Heart right ventricle (tissue), 16 donors: ENCODE measurements at regions of chr15 and their contacts with region 1.

Region 1: GRCh38 chr15:97909291-97909891 is 51.1 kb upstream of the ARRDC4 start:
- DNase-seq: peak; percentile 48 to 64
- ATAC-seq: peak; percentile 42 to 88 (median 85)
- H3K4me3 ChIP-seq: no peak overlapping the region
- H3K27ac ChIP-seq: no peak overlapping the region
- H3K4me1 ChIP-seq: peaks cover 0 to 2% (median 0%) of the 10 kb centered on the region in 9 donors
- H3K27me3 ChIP-seq: peaks cover 0 to 61% (median 37%) of the 10 kb centered on the region in 7 donors
- CTCF ChIP-seq: peak; percentile 66 to 96 (median 93)

Region 2: GRCh38 chr15:97875513-97876280 is 33.7 kb before region 1 on chr15:
- intact Hi-C with region 1: no loop called
- DNase-seq: peak in 1 of 2 donors; percentile 50
- ATAC-seq: peak; percentile 42 to 91 (median 77)
- H3K4me3 ChIP-seq: peak overlapping the region in 5 of 10 donors; percentile 24 to 41 (median 31)
- H3K27ac ChIP-seq: peak overlapping the region in 3 of 10 donors; percentile 53 to 63 (median 53)
- H3K4me1 ChIP-seq: no peaks in the 10 kb centered on the region
- H3K27me3 ChIP-seq: no peaks in the 10 kb centered on the region
- CTCF ChIP-seq: peak in 4 of 9 donors; percentile 10 to 41 (median 28)

Region 3: GRCh38 chr15:97960364-97961066 is 51.1 kb after region 1 on chr15 and contains the start of gene ARRDC4:
- intact Hi-C with region 1: loop called in 1 of 10 experiments (anchors 10 kb)
- DNase-seq: peak; percentile 100
- ATAC-seq: peak; percentile 97 to 100 (median 99)
- H3K4me3 ChIP-seq: peak within 1 kb of the TSS; percentile 84 to 98 (median 92)
- H3K27ac ChIP-seq: peak within 1 kb of the TSS; percentile 82 to 97 (median 96)
- H3K4me1 ChIP-seq: peaks cover 0 to 43% (median 16%) of the 10 kb centered on the region in 9 donors
- H3K27me3 ChIP-seq: no peaks in the 10 kb centered on the region
- CTCF ChIP-seq: no peak
- total RNA-seq, gene ARRDC4: 9.4 to 26.4 (median 14.5) TPM

Region 4: DNA sequence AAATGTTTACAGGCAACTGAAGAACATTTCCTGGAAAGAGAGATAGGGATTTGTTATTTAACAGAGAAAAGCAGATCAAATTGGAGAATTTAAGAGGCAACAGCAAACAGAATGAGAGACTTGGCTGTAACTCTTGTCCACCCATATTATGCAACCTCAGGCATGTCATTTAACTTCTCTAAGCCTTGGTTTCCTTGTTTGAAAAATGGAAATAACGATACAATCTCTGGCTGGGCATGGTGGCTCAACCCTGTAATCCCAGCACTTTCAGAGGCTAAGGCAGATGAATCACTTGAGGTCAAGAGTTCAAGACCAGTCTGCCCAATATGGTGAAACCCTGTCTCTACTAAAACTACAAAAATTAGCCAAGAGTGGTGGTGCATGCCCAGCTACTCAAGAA is 74.8 kb after region 1 on chr15:
- intact Hi-C with region 1: no loop called
- DNase-seq: no peak
- ATAC-seq: no peak
- H3K4me3 ChIP-seq: no peak overlapping the region
- H3K27ac ChIP-seq: no peak overlapping the region
- H3K4me1 ChIP-seq: peaks cover 0 to 7% (median 0%) of the 10 kb centered on the region in 9 donors
- H3K27me3 ChIP-seq: peaks cover 0 to 4% (median 0%) of the 10 kb centered on the region in 7 donors
- CTCF ChIP-seq: no peak

Region 5: DNA sequence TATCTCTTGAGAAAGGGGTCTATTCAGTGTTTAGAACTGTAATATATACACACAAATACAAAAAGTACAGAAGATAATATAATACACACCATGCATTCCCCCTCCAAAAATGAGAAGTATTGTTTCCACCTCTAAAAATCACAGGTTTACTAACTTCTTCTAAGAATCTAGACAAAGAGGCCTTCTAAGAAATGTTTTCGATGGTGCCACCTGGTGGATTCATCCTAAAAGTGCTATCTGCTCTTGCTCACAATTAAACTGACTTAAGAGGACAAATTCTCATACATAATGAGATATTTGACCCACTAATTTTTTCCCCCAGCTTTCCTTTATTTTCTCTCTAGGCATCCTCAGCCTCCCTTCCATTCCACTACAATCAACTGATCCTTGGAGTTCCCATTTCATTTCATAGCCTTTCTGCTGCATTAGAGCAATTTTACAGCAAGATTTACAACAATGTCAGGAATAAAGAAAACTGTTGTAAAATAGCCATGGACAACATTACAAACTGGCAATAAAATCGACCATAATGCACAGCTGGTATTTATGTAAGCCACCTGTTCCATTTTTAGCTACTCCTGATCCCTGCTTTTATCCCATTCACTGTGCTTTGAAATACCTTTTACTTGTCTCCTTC is 175.7 kb after region 1 on chr15:
- intact Hi-C with region 1: loop called in 9 of 10 experiments (anchors 1 to 5 kb)
- DNase-seq: peak in 1 of 2 donors; percentile 40
- ATAC-seq: no peak
- H3K4me3 ChIP-seq: no peak overlapping the region
- H3K27ac ChIP-seq: no peak overlapping the region
- H3K4me1 ChIP-seq: no peaks in the 10 kb centered on the region
- H3K27me3 ChIP-seq: no peaks in the 10 kb centered on the region
- CTCF ChIP-seq: peak; percentile 45 to 82 (median 74)

Region 6: GRCh38 chr15:98177924-98178592 is 268.7 kb after region 1 on chr15:
- intact Hi-C with region 1: loop called (anchors 1 to 10 kb)
- DNase-seq: peak in 1 of 2 donors; percentile 36
- ATAC-seq: peak; percentile 66 to 88 (median 72)
- H3K4me3 ChIP-seq: no peak overlapping the region
- H3K27ac ChIP-seq: no peak overlapping the region
- H3K4me1 ChIP-seq: peaks cover 0 to 4% (median 0%) of the 10 kb centered on the region in 9 donors
- H3K27me3 ChIP-seq: peaks cover 0 to 75% (median 41%) of the 10 kb centered on the region in 7 donors
- CTCF ChIP-seq: peak; percentile 19 to 78 (median 67)

Region 7: GRCh38 chr15:98292442-98293240 is 383.2 kb after region 1 on chr15:
- intact Hi-C with region 1: loop called in 8 of 10 experiments (anchors 5 to 10 kb)
- DNase-seq: peak; percentile 12 to 28
- ATAC-seq: peak in 1 of 8 donors; percentile 53
- H3K4me3 ChIP-seq: peak overlapping the region in 3 of 10 donors; percentile 11 to 31 (median 14)
- H3K27ac ChIP-seq: no peak overlapping the region
- H3K4me1 ChIP-seq: peaks cover 0 to 8% (median 5%) of the 10 kb centered on the region in 9 donors
- H3K27me3 ChIP-seq: peaks cover 3 to 77% (median 62%) of the 10 kb centered on the region in 7 donors
- CTCF ChIP-seq: peak; percentile 17 to 64 (median 56)

Region 8: GRCh38 chr15:98421419-98422129 is 512.2 kb after region 1 on chr15:
- intact Hi-C with region 1: loop called in 4 of 10 experiments (anchors 5 to 10 kb)
- DNase-seq: peak; percentile 53 to 73
- ATAC-seq: peak; percentile 76 to 88 (median 86)
- H3K4me3 ChIP-seq: peak overlapping the region in 9 of 10 donors; percentile 19 to 45 (median 24)
- H3K27ac ChIP-seq: no peak overlapping the region
- H3K4me1 ChIP-seq: peaks cover 7 to 18% (median 12%) of the 10 kb centered on the region in 9 donors
- H3K27me3 ChIP-seq: peaks cover 6 to 70% (median 58%) of the 10 kb centered on the region in 7 donors
- CTCF ChIP-seq: peak; percentile 98 to 100 (median 99)

Region 9: DNA sequence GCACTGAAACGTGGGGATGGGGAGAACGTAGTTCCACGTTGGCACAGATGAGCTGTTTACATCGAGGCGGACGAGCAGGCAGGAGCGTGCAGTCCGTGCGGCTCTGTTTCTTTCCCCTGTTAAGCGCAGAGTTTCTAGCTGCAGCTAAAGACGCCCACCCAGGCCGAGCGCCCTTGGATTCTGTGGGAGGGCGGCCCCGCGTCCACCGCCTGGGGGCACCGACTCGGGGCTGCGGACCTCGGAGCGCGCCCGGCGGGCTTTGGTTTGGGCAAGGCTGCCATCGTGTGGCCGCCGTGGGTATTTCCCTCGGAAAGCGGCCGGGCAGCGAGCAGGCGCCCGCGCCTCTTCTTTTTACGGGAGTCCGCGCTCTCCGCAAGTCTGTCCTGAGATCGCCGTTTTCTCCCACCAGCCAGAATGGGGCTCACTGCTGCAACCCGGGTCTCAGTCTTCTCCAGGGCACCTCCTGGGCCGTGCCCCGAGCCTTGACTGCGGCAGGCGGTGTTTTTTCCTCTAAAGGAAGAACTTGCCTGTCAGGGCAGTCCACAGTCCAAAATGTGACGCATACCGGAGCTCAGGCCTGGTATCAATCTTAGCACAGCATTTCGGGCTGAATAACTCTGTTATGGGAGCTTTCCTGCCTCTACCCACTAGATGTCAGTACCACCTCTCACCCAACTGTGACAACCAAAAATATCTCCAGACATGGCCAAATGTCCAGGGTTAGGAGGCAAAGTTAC is 519.0 kb after region 1 on chr15:
- intact Hi-C with region 1: loop called in 4 of 10 experiments (anchors 5 to 10 kb)
- DNase-seq: peak; percentile 42 to 73
- ATAC-seq: peak; percentile 72 to 88 (median 84)
- H3K4me3 ChIP-seq: peak overlapping the region in 9 of 10 donors; percentile 21 to 47 (median 37)
- H3K27ac ChIP-seq: no peak overlapping the region
- H3K4me1 ChIP-seq: peaks cover 0 to 11% (median 0%) of the 10 kb centered on the region in 9 donors
- H3K27me3 ChIP-seq: peaks cover 0 to 66% (median 60%) of the 10 kb centered on the region in 7 donors
- CTCF ChIP-seq: peak; percentile 75 to 93 (median 84)